CD4-positive, alpha-beta T cell (primary cell): ENCODE measurements at regions of chr1 and their contacts with region 1.

Region 1: GRCh38 chr1:31938174-31938950 is at the start of gene PTP4A2:
- DNase-seq: peak; percentile 61 to 93 (median 76)
- ATAC-seq: peak; percentile 52
- H3K4me3 ChIP-seq: peak within 1 kb of the TSS; percentile 98
- H3K4me3 Mint-ChIP-seq: peak within 1 kb of the TSS; percentile 94
- H3K27ac ChIP-seq: peak within 1 kb of the TSS; percentile 84 to 86
- H3K27ac Mint-ChIP-seq: peak within 1 kb of the TSS; percentile 96
- H3K4me1 ChIP-seq: peaks cover 73% of the 10 kb centered on the region
- H3K4me1 Mint-ChIP-seq: peaks cover 62% of the 10 kb centered on the region
- H3K27me3 ChIP-seq: no peaks in the 10 kb centered on the region
- H3K27me3 Mint-ChIP-seq: no peaks in the 10 kb centered on the region
- CTCF ChIP-seq: peak; percentile 24
- total RNA-seq, gene PTP4A2: 282 to 287 TPM

Region 2: GRCh38 chr1:31815752-31816500 is 122.4 kb before region 1 on chr1 and contains the start of gene SPOCD1:
- CTCF ChIA-PET with region 1: interaction called, 10 read pairs
- POLR2A ChIA-PET with region 1: interaction called, 4 read pairs
- intact Hi-C with region 1: no loop called
- DNase-seq: peak; percentile 70 to 91 (median 80)
- ATAC-seq: peak; percentile 96
- H3K4me3 ChIP-seq: no peak within 1 kb of the TSS
- H3K4me3 Mint-ChIP-seq: no peak within 1 kb of the TSS
- H3K27ac ChIP-seq: no peak within 1 kb of the TSS
- H3K27ac Mint-ChIP-seq: no peak within 1 kb of the TSS
- H3K4me1 ChIP-seq: peaks cover 12% of the 10 kb centered on the region
- H3K4me1 Mint-ChIP-seq: peaks cover 22% of the 10 kb centered on the region
- H3K27me3 ChIP-seq: no peaks in the 10 kb centered on the region
- H3K27me3 Mint-ChIP-seq: no peaks in the 10 kb centered on the region
- CTCF ChIP-seq: peak; percentile 79
- total RNA-seq, gene SPOCD1: 0.11 to 0.27 TPM

Region 3: GRCh38 chr1:31848381-31848897 is 89.9 kb before region 1 on chr1:
- CTCF ChIA-PET with region 1: no interaction called
- POLR2A ChIA-PET with region 1: interaction called, 11 read pairs
- intact Hi-C with region 1: no loop called
- DNase-seq: peak; percentile 24 to 77 (median 45)
- ATAC-seq: peak; percentile 80
- H3K4me3 ChIP-seq: peak overlapping the region; percentile 12
- H3K4me3 Mint-ChIP-seq: peak overlapping the region; percentile 54
- H3K27ac ChIP-seq: peak overlapping the region; percentile 33 to 55
- H3K27ac Mint-ChIP-seq: peak overlapping the region; percentile 78
- H3K4me1 ChIP-seq: peaks cover 38% of the 10 kb centered on the region
- H3K4me1 Mint-ChIP-seq: peaks cover 68% of the 10 kb centered on the region
- H3K27me3 ChIP-seq: no peaks in the 10 kb centered on the region
- H3K27me3 Mint-ChIP-seq: no peaks in the 10 kb centered on the region
- CTCF ChIP-seq: no peak

Region 4: DNA sequence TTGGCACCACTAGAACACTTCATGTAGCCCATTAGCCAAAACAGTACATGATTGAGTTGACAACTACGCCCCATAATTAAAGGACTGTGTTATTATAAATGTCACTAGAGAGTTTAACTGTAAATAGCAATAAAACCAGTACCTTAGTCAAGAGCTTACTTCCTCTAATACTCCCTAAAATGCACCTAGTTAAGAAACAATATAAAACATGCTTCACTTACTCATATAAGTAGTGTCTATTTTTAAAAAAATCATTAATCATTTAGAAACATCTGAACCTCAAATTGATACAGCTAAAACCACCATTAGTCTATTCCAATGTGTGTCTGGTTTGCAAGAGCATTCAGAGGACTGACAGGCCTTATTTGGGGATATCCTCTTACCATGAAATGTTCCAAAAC is 25.5 kb before region 1 on chr1:
- CTCF ChIA-PET with region 1: interaction called, 10 read pairs
- POLR2A ChIA-PET with region 1: interaction called, 9 read pairs
- intact Hi-C with region 1: no loop called
- DNase-seq: no peak
- ATAC-seq: no peak
- H3K4me3 ChIP-seq: no peak overlapping the region
- H3K4me3 Mint-ChIP-seq: no peak overlapping the region
- H3K27ac ChIP-seq: no peak overlapping the region
- H3K27ac Mint-ChIP-seq: peak overlapping the region; percentile 71
- H3K4me1 ChIP-seq: peaks cover 19% of the 10 kb centered on the region
- H3K4me1 Mint-ChIP-seq: peaks cover 82% of the 10 kb centered on the region
- H3K27me3 ChIP-seq: no peaks in the 10 kb centered on the region
- H3K27me3 Mint-ChIP-seq: no peaks in the 10 kb centered on the region
- CTCF ChIP-seq: no peak

Region 5: GRCh38 chr1:31955917-31956736 is 17.8 kb after region 1 on chr1:
- CTCF ChIA-PET with region 1: interaction called, 43 read pairs
- POLR2A ChIA-PET with region 1: interaction called, 413 read pairs
- intact Hi-C with region 1: loop called in 1 of 2 experiments (anchors 1 kb)
- DNase-seq: peak; percentile 39 to 94 (median 63)
- ATAC-seq: peak; percentile 90
- H3K4me3 ChIP-seq: no peak overlapping the region
- H3K4me3 Mint-ChIP-seq: peak overlapping the region; percentile 49
- H3K27ac ChIP-seq: peak overlapping the region; percentile 30 to 82
- H3K27ac Mint-ChIP-seq: peak overlapping the region; percentile 80
- H3K4me1 ChIP-seq: peaks cover 73% of the 10 kb centered on the region
- H3K4me1 Mint-ChIP-seq: peaks cover 71% of the 10 kb centered on the region
- H3K27me3 ChIP-seq: no peaks in the 10 kb centered on the region
- H3K27me3 Mint-ChIP-seq: no peaks in the 10 kb centered on the region
- CTCF ChIP-seq: no peak

Region 6: GRCh38 chr1:32072622-32073298 is 134.4 kb after region 1 on chr1 and contains the start of gene TMEM39B:
- CTCF ChIA-PET with region 1: no interaction called
- POLR2A ChIA-PET with region 1: interaction called, 12 read pairs
- intact Hi-C with region 1: no loop called
- DNase-seq: peak; percentile 86 to 98 (median 92)
- ATAC-seq: peak; percentile 84
- H3K4me3 ChIP-seq: peak within 1 kb of the TSS; percentile 71
- H3K4me3 Mint-ChIP-seq: peak within 1 kb of the TSS; percentile 89
- H3K27ac ChIP-seq: peak within 1 kb of the TSS; percentile 50 to 68
- H3K27ac Mint-ChIP-seq: peak within 1 kb of the TSS; percentile 82
- H3K4me1 ChIP-seq: peaks cover 27% of the 10 kb centered on the region
- H3K4me1 Mint-ChIP-seq: peaks cover 39% of the 10 kb centered on the region
- H3K27me3 ChIP-seq: no peaks in the 10 kb centered on the region
- H3K27me3 Mint-ChIP-seq: no peaks in the 10 kb centered on the region
- CTCF ChIP-seq: no peak
- total RNA-seq, gene TMEM39B: 7.2 to 7.9 TPM